ENCODE measurements at regions of chr22 and their contacts with region 1.

Region 1: GRCh38 chr22:20298803-20299735 is 20.8 kb downstream of the DGCR6L start:
- DNase-seq: peak; percentile 95
- ATAC-seq: peak; percentile 91
- H3K4me3 Mint-ChIP-seq: peak overlapping the region; percentile 71
- H3K27ac Mint-ChIP-seq: peak overlapping the region; percentile 43
- H3K4me1 Mint-ChIP-seq: no peaks in the 10 kb centered on the region
- H3K27me3 Mint-ChIP-seq: peaks cover 7% of the 10 kb centered on the region

Region 2: GRCh38 chr22:19970479-19971275 is 328.4 kb before region 1 on chr22:
- CTCF ChIA-PET with region 1: no interaction called
- POLR2A ChIA-PET with region 1: no interaction called
- intact Hi-C with region 1: loop called in 1 of 2 experiments (anchors 10 kb)
- DNase-seq: peak; percentile 86
- ATAC-seq: peak; percentile 86
- H3K4me3 Mint-ChIP-seq: no peak overlapping the region
- H3K27ac Mint-ChIP-seq: no peak overlapping the region
- H3K4me1 Mint-ChIP-seq: peaks cover 11% of the 10 kb centered on the region
- H3K27me3 Mint-ChIP-seq: no peaks in the 10 kb centered on the region

Region 3: GRCh38 chr22:19986410-19987341 is 312.4 kb before region 1 on chr22:
- CTCF ChIA-PET with region 1: no interaction called
- POLR2A ChIA-PET with region 1: no interaction called
- intact Hi-C with region 1: loop called in 1 of 2 experiments (anchors 1 kb)
- DNase-seq: peak; percentile 84
- ATAC-seq: peak; percentile 88
- H3K4me3 Mint-ChIP-seq: no peak overlapping the region
- H3K27ac Mint-ChIP-seq: no peak overlapping the region
- H3K4me1 Mint-ChIP-seq: no peaks in the 10 kb centered on the region
- H3K27me3 Mint-ChIP-seq: no peaks in the 10 kb centered on the region

Region 4: GRCh38 chr22:20079745-20080444 is 219.2 kb before region 1 on chr22 and contains the start of gene DGCR8:
- CTCF ChIA-PET with region 1: no interaction called
- POLR2A ChIA-PET with region 1: no interaction called
- intact Hi-C with region 1: loop called in 1 of 2 experiments (anchors 1 kb)
- DNase-seq: peak; percentile 78
- ATAC-seq: peak; percentile 92
- H3K4me3 Mint-ChIP-seq: peak within 1 kb of the TSS; percentile 88
- H3K27ac Mint-ChIP-seq: peak within 1 kb of the TSS; percentile 80
- H3K4me1 Mint-ChIP-seq: peaks cover 36% of the 10 kb centered on the region
- H3K27me3 Mint-ChIP-seq: no peaks in the 10 kb centered on the region
- total RNA-seq, gene DGCR8: 31.8 to 32.3 TPM

Region 5: DNA sequence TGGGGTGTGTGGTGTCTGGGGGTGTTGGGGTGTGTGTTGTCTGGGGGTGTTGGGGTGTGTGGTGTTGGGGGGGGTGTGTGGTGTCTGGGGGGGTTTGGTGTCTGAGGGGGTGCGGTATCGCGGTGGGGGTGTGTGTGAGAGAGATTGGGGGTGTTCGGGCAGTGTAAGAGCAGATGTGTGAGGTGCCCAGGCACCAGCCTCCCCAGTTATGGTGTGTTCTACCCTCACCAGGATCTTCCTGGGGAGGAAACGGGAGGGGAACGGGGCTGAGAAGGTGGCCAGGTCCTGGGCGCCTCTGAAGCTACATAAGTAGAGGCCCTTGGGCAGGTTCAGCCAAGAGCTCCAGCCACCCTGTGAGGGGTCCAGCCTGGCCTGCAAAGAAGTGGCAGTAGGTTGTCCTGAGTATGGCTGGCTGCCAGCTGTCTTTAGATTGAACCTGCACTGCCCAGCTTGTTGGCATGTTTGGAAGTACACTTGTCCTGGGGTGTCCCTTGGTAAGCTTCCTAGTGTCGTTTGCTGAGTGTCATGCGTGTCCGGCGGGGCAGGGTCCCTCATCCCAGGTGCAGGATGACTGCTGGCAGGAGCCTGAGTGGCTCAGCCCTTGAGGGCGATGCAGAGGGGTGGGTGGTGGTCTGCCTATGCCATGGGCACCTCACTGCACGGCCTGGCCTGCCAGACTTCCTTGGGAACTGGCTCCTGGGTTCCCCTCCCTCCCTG is 175.5 kb before region 1 on chr22:
- CTCF ChIA-PET with region 1: no interaction called
- POLR2A ChIA-PET with region 1: no interaction called
- intact Hi-C with region 1: no loop called
- DNase-seq: no peak
- ATAC-seq: no peak
- H3K4me3 Mint-ChIP-seq: no peak overlapping the region
- H3K27ac Mint-ChIP-seq: no peak overlapping the region
- H3K4me1 Mint-ChIP-seq: peaks cover 36% of the 10 kb centered on the region
- H3K27me3 Mint-ChIP-seq: no peaks in the 10 kb centered on the region

Region 6: DNA sequence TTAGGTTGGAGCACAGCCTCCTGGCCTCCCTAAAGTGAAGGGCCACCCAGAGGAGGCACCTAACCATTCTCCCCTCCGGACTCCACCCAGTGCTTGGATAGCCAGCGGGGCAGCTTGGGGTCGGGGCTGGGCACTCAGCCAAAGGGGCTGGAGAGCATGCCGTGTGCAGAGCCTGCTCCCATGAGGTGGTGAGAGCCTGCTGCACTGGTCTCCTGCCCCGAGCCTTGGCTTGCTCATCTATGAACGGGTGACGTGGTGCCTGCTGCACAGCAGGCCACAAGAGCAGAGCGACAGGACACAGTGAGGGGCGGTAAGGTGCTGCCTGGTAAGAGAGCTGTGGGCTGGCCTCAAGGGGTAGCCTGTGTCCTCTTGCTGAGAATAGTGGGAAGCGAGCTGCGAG is 134.2 kb before region 1 on chr22:
- CTCF ChIA-PET with region 1: no interaction called
- POLR2A ChIA-PET with region 1: no interaction called
- intact Hi-C with region 1: no loop called
- DNase-seq: no peak
- ATAC-seq: no peak
- H3K4me3 Mint-ChIP-seq: no peak overlapping the region
- H3K27ac Mint-ChIP-seq: no peak overlapping the region
- H3K4me1 Mint-ChIP-seq: no peaks in the 10 kb centered on the region
- H3K27me3 Mint-ChIP-seq: no peaks in the 10 kb centered on the region

Region 7: DNA sequence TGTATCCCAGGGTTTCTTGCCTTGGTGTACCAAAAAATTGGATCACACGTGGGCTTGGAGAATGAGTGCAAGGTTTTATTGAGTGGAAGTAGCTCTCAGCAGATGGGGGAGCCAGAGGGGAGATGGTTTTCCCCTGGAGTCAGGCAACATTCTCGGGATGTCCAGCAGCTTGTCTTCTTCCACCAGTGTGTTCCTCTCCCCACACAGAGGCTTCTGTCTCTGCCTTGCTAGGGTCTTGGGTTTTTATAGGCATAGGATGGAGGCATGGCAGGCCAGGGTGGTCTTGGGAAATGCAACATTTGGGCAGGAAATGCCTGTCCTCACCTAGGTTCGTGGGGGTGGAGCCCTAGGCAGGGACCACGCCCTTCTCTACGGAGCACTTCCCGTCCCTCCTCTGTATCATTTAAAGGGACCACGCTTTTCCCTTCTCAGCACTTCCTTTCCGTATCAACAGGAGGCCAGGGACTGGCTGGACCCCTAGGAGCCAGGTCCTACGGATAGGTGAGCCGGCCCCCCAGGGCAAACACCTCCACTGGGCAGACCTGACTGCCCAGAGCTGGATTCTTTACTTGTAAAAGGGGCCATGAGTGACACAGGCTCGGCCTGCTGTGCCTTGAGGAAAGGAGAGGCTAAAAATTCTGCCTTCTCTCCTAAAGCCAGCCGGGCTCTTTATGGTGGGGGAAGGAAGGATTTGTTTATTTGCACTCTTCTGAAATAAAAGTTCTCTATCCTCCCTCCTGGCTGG is 92.9 kb before region 1 on chr22:
- CTCF ChIA-PET with region 1: no interaction called
- POLR2A ChIA-PET with region 1: no interaction called
- intact Hi-C with region 1: loop called in 1 of 2 experiments (anchors 1 kb)
- DNase-seq: peak; percentile 80
- ATAC-seq: peak; percentile 97
- H3K4me3 Mint-ChIP-seq: peak overlapping the region; percentile 82
- H3K27ac Mint-ChIP-seq: peak overlapping the region; percentile 89
- H3K4me1 Mint-ChIP-seq: peaks cover 26% of the 10 kb centered on the region
- H3K27me3 Mint-ChIP-seq: no peaks in the 10 kb centered on the region

Region 8: DNA sequence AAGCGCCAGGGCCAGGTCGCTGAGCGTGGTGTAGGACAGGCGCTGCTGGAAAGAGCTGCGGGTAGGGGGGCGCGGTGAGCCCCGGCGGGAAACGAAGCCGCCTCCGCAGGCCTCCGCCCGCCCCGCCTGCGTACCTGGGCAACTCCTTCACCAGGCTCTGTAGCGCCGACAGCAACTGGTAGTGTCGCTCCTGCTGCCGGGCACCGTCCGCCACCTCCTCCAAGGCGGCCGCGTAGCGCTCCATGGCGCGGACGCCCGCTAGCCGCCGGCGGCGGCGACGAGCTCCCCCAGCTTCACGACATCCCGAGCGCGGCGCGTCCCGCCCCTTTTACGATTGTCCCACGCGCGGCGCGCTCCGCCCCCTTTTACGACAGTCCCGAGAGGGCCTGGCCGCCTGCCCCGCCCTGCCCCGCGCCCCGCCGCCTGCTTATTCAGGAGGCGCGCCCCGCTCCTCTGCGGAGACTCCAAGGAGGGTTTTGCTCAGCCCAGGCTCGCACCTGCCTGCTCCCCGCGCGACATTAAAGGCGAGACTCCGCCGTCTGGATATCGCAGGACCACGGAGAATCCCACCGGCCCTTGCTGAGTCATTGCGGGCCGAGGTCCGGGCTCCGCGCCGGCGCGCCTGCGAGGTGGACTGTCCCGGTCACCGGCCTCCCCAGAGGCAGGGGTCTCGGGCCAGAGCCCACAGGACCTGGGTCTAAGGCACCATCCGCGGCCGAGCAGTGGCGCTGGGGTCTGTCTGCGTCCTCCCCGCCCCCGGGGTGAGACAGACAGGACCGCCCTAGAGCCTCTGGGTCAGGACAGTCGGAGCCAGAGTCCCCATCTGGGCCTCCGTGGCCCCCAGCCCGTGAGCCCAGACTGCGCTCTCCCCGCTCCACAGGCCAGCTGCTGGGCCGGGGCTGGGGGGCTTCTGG is 20.9 kb after region 1 on chr22 and contains the start of gene DGCR6L:
- CTCF ChIA-PET with region 1: interaction called, 3 read pairs
- POLR2A ChIA-PET with region 1: no interaction called
- intact Hi-C with region 1: loop called (anchors 1 kb)
- DNase-seq: peak; percentile 99
- ATAC-seq: peak; percentile 53
- H3K4me3 Mint-ChIP-seq: peak within 1 kb of the TSS; percentile 85
- H3K27ac Mint-ChIP-seq: peak within 1 kb of the TSS; percentile 79
- H3K4me1 Mint-ChIP-seq: peaks cover 55% of the 10 kb centered on the region
- H3K27me3 Mint-ChIP-seq: no peaks in the 10 kb centered on the region
- total RNA-seq, gene DGCR6L: 22.4 to 24.8 TPM

Region 9: GRCh38 chr22:20430720-20431510 is 131.8 kb after region 1 on chr22:
- CTCF ChIA-PET with region 1: no interaction called
- POLR2A ChIA-PET with region 1: no interaction called
- intact Hi-C with region 1: loop called in 1 of 2 experiments (anchors 1 kb)
- DNase-seq: peak; percentile 79
- ATAC-seq: peak; percentile 57
- H3K4me3 Mint-ChIP-seq: peak overlapping the region; percentile 45
- H3K27ac Mint-ChIP-seq: no peak overlapping the region
- H3K4me1 Mint-ChIP-seq: peaks cover 12% of the 10 kb centered on the region
- H3K27me3 Mint-ChIP-seq: peaks cover 51% of the 10 kb centered on the region